Caco-2 (cell line): ENCODE measurements at regions of chr3 and their contacts with region 1.

Region 1: GRCh38 chr3:177574251-177574743 is 377.0 kb upstream of the TBL1XR1 start:
- DNase-seq: peak; percentile 72 to 80
- H3K4me3 ChIP-seq: no peak overlapping the region
- H3K4me3 Mint-ChIP-seq: peak overlapping the region; percentile 49
- H3K27ac Mint-ChIP-seq: peak overlapping the region; percentile 87
- H3K4me1 ChIP-seq: no peaks in the 10 kb centered on the region; the same call in 1 of the 2 replicates
- H3K4me1 Mint-ChIP-seq: peaks cover 13% of the 10 kb centered on the region
- H3K27me3 ChIP-seq: no peaks in the 10 kb centered on the region
- H3K27me3 Mint-ChIP-seq: no peaks in the 10 kb centered on the region
- CTCF ChIP-seq: no peak

Region 2: DNA sequence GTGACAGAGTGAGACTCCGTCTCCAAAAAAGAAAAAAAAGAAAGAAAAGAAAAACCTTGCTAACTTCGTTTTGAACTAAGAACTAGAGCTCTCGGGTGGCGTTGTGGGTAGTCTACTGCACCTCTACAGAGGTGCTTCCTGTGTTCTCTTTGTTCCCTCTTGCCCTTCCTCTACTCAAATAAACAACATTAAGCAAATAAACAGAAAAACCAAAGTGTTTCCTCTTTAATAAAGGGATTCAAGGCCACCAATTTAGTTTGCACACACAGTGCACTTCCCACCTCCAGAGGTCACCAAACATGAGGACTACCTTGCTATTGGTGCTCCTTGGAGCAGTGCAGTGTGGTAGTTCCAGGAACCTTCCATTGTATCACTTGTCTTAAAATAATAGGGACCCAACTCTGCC is 22.9 kb before region 1 on chr3:
- CTCF ChIA-PET with region 1: no interaction called
- POLR2A ChIA-PET with region 1: no interaction called
- intact Hi-C with region 1: loop called (anchors 1 kb)
- DNase-seq: peak in 1 of 2 experiments; percentile 3
- H3K4me3 ChIP-seq: no peak overlapping the region
- H3K4me3 Mint-ChIP-seq: no peak overlapping the region
- H3K27ac Mint-ChIP-seq: no peak overlapping the region
- H3K4me1 ChIP-seq: no peaks in the 10 kb centered on the region
- H3K4me1 Mint-ChIP-seq: no peaks in the 10 kb centered on the region
- H3K27me3 ChIP-seq: no peaks in the 10 kb centered on the region
- H3K27me3 Mint-ChIP-seq: no peaks in the 10 kb centered on the region
- CTCF ChIP-seq: no peak